ENCODE measurements at regions of chr7 and their contacts with region 1.

Region 1: DNA sequence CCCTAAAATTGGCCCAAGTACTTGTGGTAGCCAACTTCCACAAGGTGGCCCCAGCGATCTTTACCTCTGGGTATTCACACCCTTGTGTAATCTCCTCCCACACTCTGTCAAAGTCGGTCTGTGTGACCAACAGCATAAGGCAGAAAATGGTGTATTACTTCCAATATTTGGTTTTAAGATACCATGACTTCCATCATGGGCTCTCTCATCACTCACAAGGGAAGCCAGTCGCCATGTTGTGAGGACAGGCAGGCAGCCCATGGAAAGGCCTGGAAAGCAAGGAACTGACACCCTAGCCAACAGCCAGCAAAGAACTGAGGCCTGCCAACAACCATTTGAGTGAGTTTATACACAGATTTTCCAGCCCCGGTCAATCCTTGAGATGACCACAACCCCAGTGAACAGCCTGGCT is 91.0 kb upstream of the KMT2E start:
- DNase-seq: peak; percentile 73
- H3K4me3 ChIP-seq: no peak overlapping the region
- H3K27ac ChIP-seq: peak overlapping the region; percentile 9
- H3K4me1 ChIP-seq: no peaks in the 10 kb centered on the region
- H3K27me3 ChIP-seq: no peaks in the 10 kb centered on the region
- CTCF ChIP-seq: peak; percentile 93 to 96

Region 2: DNA sequence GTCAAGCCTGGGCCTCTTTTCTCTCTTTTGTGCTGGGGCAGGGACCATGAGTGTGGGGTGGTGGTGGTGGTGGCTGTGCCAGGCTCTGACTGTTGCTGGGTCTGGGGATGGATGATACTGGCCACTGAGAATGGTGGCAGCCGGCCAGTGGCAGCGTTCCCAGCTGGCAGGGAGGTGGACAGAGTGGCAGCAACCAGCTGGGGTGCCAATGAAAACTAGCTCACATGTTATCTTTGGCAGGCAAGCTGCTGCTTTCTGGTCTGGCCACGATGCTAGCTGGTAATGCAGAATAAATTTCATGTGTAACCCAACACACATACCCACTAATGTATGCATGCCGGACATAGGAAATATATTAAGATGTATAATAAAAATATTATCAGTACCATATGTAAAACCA is 1382.0 kb before region 1 on chr7:
- CTCF ChIA-PET with region 1: no interaction called
- dilution Hi-C with region 1: no loop called
- in situ Hi-C with region 1: loop called in 1 of 2 experiments (anchors 25 kb)
- intact Hi-C with region 1: no loop called
- DNase-seq: no peak
- H3K4me3 ChIP-seq: no peak overlapping the region
- H3K27ac ChIP-seq: no peak overlapping the region
- H3K4me1 ChIP-seq: no peaks in the 10 kb centered on the region
- H3K27me3 ChIP-seq: no peaks in the 10 kb centered on the region
- CTCF ChIP-seq: no peak

Region 3: GRCh38 chr7:104272767-104273384 is 650.1 kb before region 1 on chr7:
- CTCF ChIA-PET with region 1: no interaction called
- dilution Hi-C with region 1: no loop called
- in situ Hi-C with region 1: no loop called
- intact Hi-C with region 1: loop called (anchors 2 kb)
- DNase-seq: peak; percentile 33
- H3K4me3 ChIP-seq: no peak overlapping the region
- H3K27ac ChIP-seq: no peak overlapping the region
- H3K4me1 ChIP-seq: no peaks in the 10 kb centered on the region
- H3K27me3 ChIP-seq: no peaks in the 10 kb centered on the region
- CTCF ChIP-seq: peak; percentile 57 to 73

Region 4: DNA sequence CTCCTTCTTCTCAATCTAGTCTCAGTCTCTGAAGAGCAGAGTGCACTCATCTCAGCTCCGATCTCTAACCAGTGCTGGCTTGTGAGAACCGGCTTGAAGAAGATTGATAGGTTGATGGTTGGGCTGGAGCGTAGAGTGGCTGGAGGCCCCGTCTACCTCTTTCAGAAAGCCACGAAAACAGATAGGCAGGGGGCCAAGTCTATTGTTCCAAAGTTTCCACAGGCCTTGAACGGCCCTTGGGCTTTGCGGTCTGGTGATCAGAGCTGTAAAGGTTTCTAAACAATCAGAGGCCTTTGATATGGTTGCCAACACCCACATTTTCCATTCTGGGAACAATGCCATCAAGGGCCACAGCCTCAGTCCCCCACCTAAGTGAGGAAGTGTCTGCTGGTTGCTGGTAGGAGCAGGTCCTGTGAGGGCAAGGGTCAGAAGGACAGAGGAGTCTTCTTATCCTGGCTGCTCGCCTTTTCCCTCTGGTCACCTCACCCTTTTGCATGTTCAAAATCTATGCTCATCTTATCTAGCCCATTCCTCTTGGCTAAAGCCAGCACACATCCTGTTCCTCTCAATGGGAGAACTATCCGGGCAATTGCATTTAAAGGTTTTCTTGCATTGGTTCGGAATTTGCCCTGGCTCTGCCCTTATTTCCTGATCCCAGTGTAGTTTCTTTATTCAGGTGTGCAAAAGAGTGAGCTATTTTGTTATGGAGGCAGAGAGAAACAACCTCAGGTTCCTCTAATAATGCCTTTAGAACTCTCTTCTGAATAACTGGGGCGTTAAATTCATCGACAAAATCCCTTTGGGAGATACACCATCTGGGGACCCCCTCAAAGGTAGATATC is 20.7 kb after region 1 on chr7:
- CTCF ChIA-PET with region 1: no interaction called
- dilution Hi-C with region 1: no loop called
- in situ Hi-C with region 1: no loop called
- intact Hi-C with region 1: loop called (anchors 1 kb)
- DNase-seq: peak; percentile 68
- H3K4me3 ChIP-seq: no peak overlapping the region
- H3K27ac ChIP-seq: peak overlapping the region; percentile 98
- H3K4me1 ChIP-seq: peaks cover 33% of the 10 kb centered on the region
- H3K27me3 ChIP-seq: no peaks in the 10 kb centered on the region
- CTCF ChIP-seq: no peak

Region 5: GRCh38 chr7:105013221-105013815 is 90.3 kb after region 1 on chr7:
- CTCF ChIA-PET with region 1: no interaction called
- dilution Hi-C with region 1: no loop called
- in situ Hi-C with region 1: no loop called
- intact Hi-C with region 1: loop called (anchors 1 kb)
- DNase-seq: peak; percentile 92
- H3K4me3 ChIP-seq: peak overlapping the region; percentile 90 to 99 (median 99)
- H3K27ac ChIP-seq: peak overlapping the region; percentile 100
- H3K4me1 ChIP-seq: peaks cover 16% of the 10 kb centered on the region
- H3K27me3 ChIP-seq: no peaks in the 10 kb centered on the region
- CTCF ChIP-seq: peak; percentile 34 to 60

Region 6: DNA sequence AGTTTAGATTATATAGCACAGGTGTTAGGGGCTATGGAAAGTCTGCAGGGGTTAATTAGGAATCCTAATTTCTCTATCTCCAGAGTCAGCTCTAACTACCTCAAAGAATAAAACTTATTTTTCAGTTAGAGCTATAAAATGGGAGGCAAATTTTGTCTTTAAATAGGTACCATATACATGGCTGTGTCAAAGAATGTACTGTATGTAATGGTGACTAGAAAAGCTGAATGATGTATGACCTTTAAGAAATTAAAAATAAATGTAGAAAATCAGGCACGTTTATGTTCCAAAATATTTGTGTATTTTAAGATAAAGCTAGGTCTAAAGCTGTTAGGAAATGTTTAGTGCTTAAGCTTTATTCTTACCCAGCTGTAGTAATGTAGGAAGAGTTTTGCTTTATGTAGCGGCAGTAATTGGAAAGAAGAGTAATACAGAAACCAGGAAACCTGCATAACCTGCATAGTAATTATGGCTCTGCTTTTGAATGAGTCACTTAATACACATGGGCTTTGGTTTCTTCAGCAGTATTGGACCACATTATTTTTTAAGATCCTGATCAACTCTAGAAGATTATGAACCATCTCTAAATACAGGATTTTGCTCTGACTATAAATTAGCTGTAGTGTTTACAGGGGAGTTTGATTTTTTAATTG is 176.0 kb after region 1 on chr7:
- CTCF ChIA-PET with region 1: no interaction called
- dilution Hi-C with region 1: no loop called
- in situ Hi-C with region 1: no loop called
- intact Hi-C with region 1: loop called (anchors 5 kb)
- DNase-seq: peak; percentile 32
- H3K4me3 ChIP-seq: no peak overlapping the region
- H3K27ac ChIP-seq: no peak overlapping the region
- H3K4me1 ChIP-seq: no peaks in the 10 kb centered on the region
- H3K27me3 ChIP-seq: no peaks in the 10 kb centered on the region
- CTCF ChIP-seq: no peak

Region 7: DNA sequence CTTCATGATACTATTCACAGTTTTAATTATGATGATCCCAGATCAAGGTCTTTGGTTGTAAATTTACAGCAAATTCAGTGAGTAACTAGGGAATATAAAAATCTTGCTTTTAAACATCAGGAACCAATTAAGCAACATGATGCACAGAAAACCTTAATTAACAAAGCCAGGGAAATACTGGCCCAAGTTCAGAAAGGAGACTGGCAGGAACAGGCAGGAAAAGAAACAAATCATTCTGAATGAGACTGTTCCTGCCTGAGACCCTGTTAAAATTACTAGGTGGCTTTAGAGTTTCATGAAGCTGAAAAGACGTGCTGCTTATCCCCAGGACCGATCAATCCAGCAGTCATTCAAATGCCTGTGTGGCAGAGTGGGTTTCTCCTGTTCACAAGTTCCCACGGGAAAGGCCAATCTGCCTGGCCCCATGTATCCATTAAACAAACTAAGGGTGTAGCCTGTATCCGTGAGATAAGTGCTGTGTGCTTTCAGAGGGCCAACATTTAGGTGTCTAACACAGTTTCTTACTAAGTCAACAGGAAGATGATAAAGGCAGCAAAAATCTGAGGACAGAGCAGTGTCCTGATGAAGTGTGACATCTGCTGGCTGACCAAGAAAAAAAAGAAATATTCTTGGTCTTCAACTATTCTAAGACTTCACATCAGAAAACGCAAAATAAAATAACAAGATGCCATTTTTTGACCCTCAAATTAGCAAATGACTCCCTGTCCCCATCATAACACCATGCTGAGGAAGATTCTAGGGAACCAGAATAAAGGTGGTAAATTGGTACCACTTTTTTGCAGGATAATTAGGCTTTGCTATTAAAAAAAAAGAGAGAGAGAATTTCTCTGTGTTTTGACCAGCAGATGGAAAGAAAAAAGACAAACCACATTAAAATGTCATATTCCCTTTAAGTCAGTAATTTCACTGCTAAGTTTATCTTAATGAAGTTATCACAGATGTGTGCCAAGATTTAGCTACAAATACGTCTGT is 564.9 kb after region 1 on chr7:
- CTCF ChIA-PET with region 1: no interaction called
- dilution Hi-C with region 1: no loop called
- in situ Hi-C with region 1: no loop called
- intact Hi-C with region 1: loop called (anchors 2 kb)
- DNase-seq: peak; percentile 41
- H3K4me3 ChIP-seq: no peak overlapping the region
- H3K27ac ChIP-seq: no peak overlapping the region
- H3K4me1 ChIP-seq: peaks cover 6% of the 10 kb centered on the region
- H3K27me3 ChIP-seq: no peaks in the 10 kb centered on the region
- CTCF ChIP-seq: peak; percentile 25 to 58

Measured in mammary epithelial cell (primary cell).